H1 (cell line): ENCODE measurements at regions of chr6 and their contacts with region 1.

Region 1: GRCh38 chr6:10434692-10435376 is 20.0 kb upstream of the TFAP2A start:
- DNase-seq: no peak
- H3K4me3 ChIP-seq: no peak overlapping the region
- H3K27ac ChIP-seq: no peak overlapping the region
- H3K4me1 ChIP-seq: peaks cover 0 to 2% (median 0%) of the 10 kb centered on the region in 4 experiments; a peak in 1 of 7 replicates
- H3K27me3 ChIP-seq: no peaks in the 10 kb centered on the region; a peak in 3 of 7 replicates
- CTCF ChIP-seq: peak in 2 of 3 experiments; percentile 20 to 53; a peak in 2 of 4 replicates
- EP300 ChIP-seq: no peak
- POLR2A ChIP-seq: no peak
- RAD21 ChIP-seq: peak; percentile 74 to 75

Region 2: DNA sequence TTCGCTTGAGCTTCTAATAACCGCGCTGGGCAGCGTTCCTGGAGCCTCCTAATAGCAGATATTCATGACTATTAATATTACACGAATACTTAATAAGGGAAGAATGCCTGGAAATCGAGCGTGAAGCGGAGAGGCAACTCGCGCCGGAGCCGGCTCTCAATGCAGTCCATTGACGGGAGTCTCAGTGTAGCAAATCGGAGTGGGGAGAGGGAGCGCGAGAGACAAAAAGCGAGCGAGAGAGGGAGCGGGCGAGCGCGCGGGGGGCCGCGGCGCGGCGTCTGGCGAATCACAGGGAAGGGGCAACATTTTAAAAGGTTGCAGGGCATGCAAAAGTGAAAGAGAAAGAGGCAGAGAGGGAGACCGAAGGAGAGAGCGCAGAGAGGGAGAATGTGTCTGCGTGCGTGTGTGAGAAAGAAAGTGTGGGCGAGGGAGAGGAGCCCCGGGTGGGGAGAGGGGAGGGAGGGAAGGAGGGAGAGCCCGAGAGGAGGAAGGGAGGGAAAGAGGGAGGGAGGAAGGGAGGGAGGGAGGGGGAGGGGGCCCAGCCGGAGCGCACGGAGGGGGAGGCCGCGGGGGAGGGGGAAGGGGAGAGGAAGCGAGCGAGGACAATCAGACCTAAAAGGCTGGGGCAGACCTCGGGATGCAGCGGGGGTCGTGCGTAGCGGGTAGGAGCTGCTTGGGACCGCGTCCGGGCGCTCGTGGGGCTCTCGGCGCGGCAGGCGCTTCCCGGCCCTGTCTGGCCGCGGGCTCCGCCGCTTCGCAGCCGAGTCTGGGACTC is 22.7 kb before region 1 on chr6:
- CTCF ChIA-PET with region 1: interaction called, 11 read pairs
- POLR2A ChIA-PET with region 1: no interaction called
- DNase-seq: peak in 1 of 2 experiments; percentile 86
- H3K4me3 ChIP-seq: peak overlapping the region; percentile 42 to 58 (median 48)
- H3K27ac ChIP-seq: no peak overlapping the region
- H3K4me1 ChIP-seq: peaks cover 4 to 39% (median 28%) of the 10 kb centered on the region in 4 experiments
- H3K27me3 ChIP-seq: peaks cover 73 to 98% (median 88%) of the 10 kb centered on the region in 4 experiments
- CTCF ChIP-seq: no peak
- EP300 ChIP-seq: no peak
- POLR2A ChIP-seq: no peak
- RAD21 ChIP-seq: no peak

Region 3: DNA sequence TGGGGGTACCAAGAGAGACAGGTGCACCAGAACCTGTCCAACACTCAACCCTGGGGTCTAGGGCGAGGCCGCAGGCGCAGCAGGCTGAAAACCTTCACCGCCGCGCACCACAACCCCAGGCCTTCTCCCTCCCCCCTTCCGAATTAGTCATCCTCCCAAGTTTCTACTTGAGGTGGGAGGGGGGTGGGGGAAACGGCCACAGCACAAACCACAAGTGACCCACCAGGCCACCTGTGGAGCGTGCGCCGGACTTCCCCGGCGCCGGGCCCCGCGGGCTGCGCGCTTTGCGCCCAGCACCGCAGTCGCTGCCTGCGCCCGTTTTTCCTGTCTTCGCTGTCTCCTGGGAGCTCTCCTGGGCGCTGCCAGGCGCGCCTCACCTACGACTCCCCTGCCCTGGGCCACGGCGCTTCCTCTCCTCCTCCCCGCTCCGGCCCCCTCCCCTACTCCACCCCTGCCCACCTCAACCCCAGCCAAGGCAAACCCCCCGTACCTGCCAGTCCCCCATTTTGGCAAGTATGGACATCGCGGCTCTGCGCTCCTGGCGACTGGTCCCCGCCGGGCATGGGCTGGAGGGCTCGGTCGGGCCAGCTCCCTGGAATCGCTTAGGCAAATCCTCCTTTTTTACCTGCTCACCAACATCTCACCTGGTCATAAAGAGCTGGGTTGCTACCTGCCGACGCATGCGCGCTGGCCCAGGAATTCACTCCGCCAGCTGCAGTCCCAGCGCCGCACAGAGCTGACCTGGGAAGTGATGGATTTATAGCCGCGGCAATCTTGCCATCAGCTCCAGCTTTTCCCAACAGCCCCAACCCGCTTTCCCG is 15.7 kb before region 1 on chr6:
- CTCF ChIA-PET with region 1: interaction called, 41 read pairs
- POLR2A ChIA-PET with region 1: no interaction called
- DNase-seq: peak in 1 of 2 experiments; percentile 85
- H3K4me3 ChIP-seq: peak overlapping the region; percentile 19 to 53 (median 34)
- H3K27ac ChIP-seq: no peak overlapping the region
- H3K4me1 ChIP-seq: peaks cover 6 to 54% (median 38%) of the 10 kb centered on the region in 4 experiments
- H3K27me3 ChIP-seq: peaks cover 86 to 100% (median 98%) of the 10 kb centered on the region in 4 experiments
- CTCF ChIP-seq: no peak
- EP300 ChIP-seq: no peak
- POLR2A ChIP-seq: no peak
- RAD21 ChIP-seq: no peak

Region 4: GRCh38 chr6:10451828-10452509 is 17.1 kb after region 1 on chr6:
- CTCF ChIA-PET with region 1: interaction called, 36 read pairs
- POLR2A ChIA-PET with region 1: no interaction called
- DNase-seq: no peak
- H3K4me3 ChIP-seq: no peak overlapping the region
- H3K27ac ChIP-seq: no peak overlapping the region
- H3K4me1 ChIP-seq: no peaks in the 10 kb centered on the region; a peak in 1 of 7 replicates
- H3K27me3 ChIP-seq: no peaks in the 10 kb centered on the region
- CTCF ChIP-seq: no peak
- EP300 ChIP-seq: no peak
- POLR2A ChIP-seq: no peak
- RAD21 ChIP-seq: no peak